Caco-2 (cell line): ENCODE measurements at regions of chr22 and their contacts with region 1.

Region 1: GRCh38 chr22:38187413-38188212 is 6.0 kb upstream of the PLA2G6 start:
- DNase-seq: no peak
- H3K4me3 ChIP-seq: no peak overlapping the region
- H3K4me3 Mint-ChIP-seq: no peak overlapping the region
- H3K27ac Mint-ChIP-seq: no peak overlapping the region
- H3K4me1 ChIP-seq: peaks cover 15% of the 10 kb centered on the region; the same call in 1 of the 2 replicates
- H3K4me1 Mint-ChIP-seq: peaks cover 21% of the 10 kb centered on the region
- H3K27me3 ChIP-seq: no peaks in the 10 kb centered on the region
- H3K27me3 Mint-ChIP-seq: no peaks in the 10 kb centered on the region
- CTCF ChIP-seq: no peak

Region 2: GRCh38 chr22:38172832-38173638 is 14.6 kb before region 1 on chr22:
- CTCF ChIA-PET with region 1: no interaction called
- POLR2A ChIA-PET with region 1: no interaction called
- intact Hi-C with region 1: no loop called
- DNase-seq: no peak
- H3K4me3 ChIP-seq: no peak overlapping the region
- H3K4me3 Mint-ChIP-seq: no peak overlapping the region
- H3K27ac Mint-ChIP-seq: no peak overlapping the region
- H3K4me1 ChIP-seq: peaks cover 11% of the 10 kb centered on the region
- H3K4me1 Mint-ChIP-seq: no peaks in the 10 kb centered on the region
- H3K27me3 ChIP-seq: no peaks in the 10 kb centered on the region
- H3K27me3 Mint-ChIP-seq: no peaks in the 10 kb centered on the region
- CTCF ChIP-seq: no peak

Region 3: GRCh38 chr22:38201710-38202436 is 14.3 kb after region 1 on chr22 and contains the start of gene MAFF:
- CTCF ChIA-PET with region 1: no interaction called
- POLR2A ChIA-PET with region 1: interaction called, 11 read pairs
- intact Hi-C with region 1: loop called (anchors 2 kb)
- DNase-seq: peak; percentile 95 to 96
- H3K4me3 ChIP-seq: peak within 1 kb of the TSS; percentile 99
- H3K4me3 Mint-ChIP-seq: peak within 1 kb of the TSS; percentile 78
- H3K27ac Mint-ChIP-seq: peak within 1 kb of the TSS; percentile 43
- H3K4me1 ChIP-seq: peaks cover 9% of the 10 kb centered on the region; the same call in 1 of the 2 replicates
- H3K4me1 Mint-ChIP-seq: peaks cover 13% of the 10 kb centered on the region
- H3K27me3 ChIP-seq: no peaks in the 10 kb centered on the region
- H3K27me3 Mint-ChIP-seq: no peaks in the 10 kb centered on the region
- CTCF ChIP-seq: no peak
- total RNA-seq, gene MAFF: 6.8 and 9.0 TPM in 2 replicates

Region 4: DNA sequence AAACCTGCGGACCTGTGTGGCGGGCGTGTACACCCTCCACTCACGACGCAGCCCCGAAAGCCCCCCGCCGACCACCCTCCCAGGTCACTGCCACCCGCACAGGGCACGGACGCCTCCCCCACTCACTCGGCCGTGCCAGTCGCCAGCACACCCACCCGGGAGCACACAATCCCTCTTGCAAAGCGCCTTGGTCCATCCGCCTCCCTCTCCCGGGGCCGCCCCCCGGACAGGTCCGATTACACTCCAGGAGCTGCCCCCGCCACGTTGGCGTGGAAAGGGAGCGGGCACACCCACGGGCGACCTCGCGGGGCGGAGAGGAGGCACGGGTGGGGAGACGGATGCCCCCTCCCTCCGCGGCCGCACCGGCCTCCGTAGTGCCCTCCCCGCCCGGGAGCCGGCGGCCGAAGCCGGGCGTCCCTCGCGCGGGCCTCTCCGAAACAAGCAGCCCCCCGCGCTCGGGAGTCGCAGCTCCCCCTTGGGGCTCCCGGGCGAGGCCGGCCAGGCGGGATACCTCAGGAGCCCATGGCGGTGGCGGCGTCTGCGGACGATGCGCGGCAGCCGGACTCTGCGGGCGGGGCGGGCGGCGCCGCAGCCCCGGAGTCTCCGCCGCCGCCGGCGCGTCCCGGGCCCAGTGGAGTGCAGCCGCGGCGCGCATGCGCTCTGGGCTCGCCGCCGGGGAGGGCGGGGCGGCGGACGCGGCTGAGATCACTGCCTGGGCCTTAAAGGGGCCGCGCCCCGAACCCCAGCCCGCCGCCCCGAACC is 84.9 kb after region 1 on chr22 and contains the start of gene TMEM184B:
- CTCF ChIA-PET with region 1: no interaction called
- POLR2A ChIA-PET with region 1: no interaction called
- intact Hi-C with region 1: no loop called
- DNase-seq: peak; percentile 55 to 87
- H3K4me3 ChIP-seq: peak within 1 kb of the TSS; percentile 97
- H3K4me3 Mint-ChIP-seq: peak within 1 kb of the TSS; percentile 83
- H3K27ac Mint-ChIP-seq: peak within 1 kb of the TSS; percentile 75
- H3K4me1 ChIP-seq: peaks cover 5% of the 10 kb centered on the region
- H3K4me1 Mint-ChIP-seq: peaks cover 23% of the 10 kb centered on the region
- H3K27me3 ChIP-seq: no peaks in the 10 kb centered on the region
- H3K27me3 Mint-ChIP-seq: no peaks in the 10 kb centered on the region
- CTCF ChIP-seq: no peak
- total RNA-seq, gene TMEM184B: 52.4 and 53.3 TPM in 2 replicates